KBM-7 (cell line): ENCODE measurements at regions of chr2 and their contacts with region 1.

Region 1: DNA sequence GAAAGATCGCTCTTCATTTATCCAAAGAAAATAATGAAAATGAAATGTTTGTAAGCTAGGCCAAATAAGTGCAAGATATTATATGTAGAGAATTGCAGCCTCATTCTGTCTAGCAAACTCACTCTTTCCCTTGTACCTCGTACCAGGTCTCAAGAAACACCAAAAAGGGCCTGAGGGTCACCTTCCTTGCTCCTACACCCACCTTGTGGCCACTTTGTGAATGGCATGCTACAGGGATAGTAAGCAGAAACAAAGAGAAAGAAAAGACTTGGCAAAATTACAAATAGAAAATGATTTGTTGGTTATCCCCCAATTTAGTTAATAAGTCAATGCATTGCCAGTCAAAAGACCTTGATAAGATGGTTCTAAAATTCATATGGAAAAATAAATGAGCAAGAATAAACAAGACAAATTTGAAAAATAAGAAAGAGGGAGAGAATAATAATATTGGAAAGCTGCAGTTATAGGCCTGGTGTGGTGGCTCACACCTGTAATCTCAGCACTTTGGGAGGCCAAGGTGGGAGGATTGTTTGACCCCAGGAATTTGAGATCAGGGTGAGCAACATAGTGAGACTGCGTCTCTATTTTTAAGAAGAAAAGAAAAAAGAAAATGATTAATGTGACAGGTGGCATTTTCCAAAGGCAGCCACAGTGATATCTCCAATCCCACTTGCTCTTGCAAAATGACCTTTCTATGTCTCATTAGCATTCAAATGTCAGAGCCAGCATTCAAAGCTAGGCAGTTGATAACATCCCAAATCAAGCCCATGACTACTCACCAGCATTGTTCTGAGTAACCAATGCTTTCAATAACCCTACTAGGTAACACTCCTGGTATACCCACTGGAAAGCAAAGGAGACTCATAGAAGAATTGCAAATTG is 38.8 kb upstream of the BMP10 start:
- DNase-seq: peak; percentile 79

Region 2: GRCh38 chr2:68726608-68727367 is 183.2 kb before region 1 on chr2:
- in situ Hi-C with region 1: loop called (anchors 25 kb)
- DNase-seq: peak; percentile 95

Region 3: GRCh38 chr2:68857855-68858456 is 52.1 kb before region 1 on chr2:
- in situ Hi-C with region 1: loop called (anchors 10 kb)
- DNase-seq: no peak